ENCODE measurements at regions of chr4 and their contacts with region 1.

Region 1: GRCh38 chr4:107600436-107600835 is 119.6 kb downstream of the PAPSS1 start:
- DNase-seq: no peak
- H3K4me3 ChIP-seq: no peak overlapping the region
- H3K27ac ChIP-seq: no peak overlapping the region
- H3K4me1 ChIP-seq: no peaks in the 10 kb centered on the region
- H3K27me3 ChIP-seq: no peaks in the 10 kb centered on the region
- CTCF ChIP-seq: no peak
- POLR2A ChIP-seq: no peak

Region 2: GRCh38 chr4:107497054-107497453 is 103.4 kb before region 1 on chr4:
- intact Hi-C with region 1: loop called (anchors 10 kb)
- DNase-seq: no peak
- H3K4me3 ChIP-seq: no peak overlapping the region
- H3K27ac ChIP-seq: no peak overlapping the region
- H3K4me1 ChIP-seq: no peaks in the 10 kb centered on the region
- H3K27me3 ChIP-seq: no peaks in the 10 kb centered on the region
- CTCF ChIP-seq: no peak
- POLR2A ChIP-seq: no peak

Measured in breast epithelium (tissue), 4 donors.